Left colon (tissue), 2 donors: ENCODE measurements at regions of chr1 and their contacts with region 1.

Region 1: DNA sequence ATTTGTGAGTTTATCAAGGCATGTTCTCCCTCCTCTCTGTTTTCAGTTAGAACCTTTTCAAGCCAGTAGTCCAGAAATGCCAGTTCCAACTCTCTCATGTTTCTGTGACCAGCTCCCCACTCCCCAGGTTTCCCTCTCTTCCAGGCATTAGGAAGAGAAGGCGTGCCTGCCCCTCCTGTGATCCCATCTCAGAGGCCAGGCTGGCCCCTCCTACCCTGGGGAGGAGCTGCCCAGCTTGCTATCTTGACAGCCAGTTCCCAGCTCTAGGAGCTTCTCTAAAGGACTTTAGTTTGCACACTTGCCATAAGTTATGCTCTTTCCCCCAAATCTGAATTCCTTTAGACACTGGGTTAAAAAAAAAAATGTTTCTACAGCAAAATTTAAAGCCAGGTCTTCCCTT is 8.9 kb downstream of the HYI start:
- DNase-seq: peak; percentile 9 to 12
- ATAC-seq: peak; percentile 29

Region 2: DNA sequence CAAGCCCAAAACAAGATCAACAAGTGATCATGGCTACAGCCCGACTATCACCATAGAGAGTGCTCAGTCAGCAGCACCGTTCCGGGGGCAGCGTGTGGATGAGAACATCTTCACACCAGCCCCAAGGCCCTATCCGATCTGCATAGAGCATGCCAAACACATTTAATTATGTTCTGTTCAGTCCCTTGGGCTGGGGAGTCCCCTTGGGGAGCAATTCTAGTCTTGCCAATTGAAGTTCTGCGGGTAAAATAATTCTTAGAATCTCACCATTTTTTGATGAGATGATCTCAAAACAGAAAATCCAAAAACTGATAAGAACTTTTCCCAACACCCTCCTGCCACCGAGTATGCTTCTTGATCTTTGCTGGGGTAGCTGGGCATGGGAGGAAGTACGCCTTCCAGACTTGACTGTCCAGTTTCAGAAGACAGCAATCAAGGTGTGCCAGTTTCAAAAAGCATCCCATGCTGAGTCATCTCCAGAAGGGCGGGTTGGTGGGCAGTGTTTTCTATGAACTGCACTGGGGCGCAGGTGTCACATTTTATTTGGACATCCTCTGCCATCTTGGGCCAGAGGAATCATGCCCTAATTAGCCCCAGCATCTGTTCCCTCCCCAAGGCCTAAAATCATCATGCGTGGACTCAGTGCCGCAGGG is 65.0 kb after region 1 on chr1:
- intact Hi-C with region 1: loop called in 1 of 2 experiments (anchors 5 kb)
- DNase-seq: peak in 1 of 2 donors; percentile 56
- ATAC-seq: peak; percentile 73